ENCODE measurements at regions of chr20 and their contacts with region 1.

Region 1: GRCh38 chr20:41173161-41173721 is 35.9 kb downstream of the PLCG1 start:
- DNase-seq: peak; percentile 72
- H3K4me3 Mint-ChIP-seq: no peak overlapping the region
- H3K27ac Mint-ChIP-seq: peak overlapping the region; percentile 59
- H3K4me1 Mint-ChIP-seq: peaks cover 27% of the 10 kb centered on the region
- H3K27me3 Mint-ChIP-seq: no peaks in the 10 kb centered on the region
- CTCF ChIP-seq: peak; percentile 97

Region 2: DNA sequence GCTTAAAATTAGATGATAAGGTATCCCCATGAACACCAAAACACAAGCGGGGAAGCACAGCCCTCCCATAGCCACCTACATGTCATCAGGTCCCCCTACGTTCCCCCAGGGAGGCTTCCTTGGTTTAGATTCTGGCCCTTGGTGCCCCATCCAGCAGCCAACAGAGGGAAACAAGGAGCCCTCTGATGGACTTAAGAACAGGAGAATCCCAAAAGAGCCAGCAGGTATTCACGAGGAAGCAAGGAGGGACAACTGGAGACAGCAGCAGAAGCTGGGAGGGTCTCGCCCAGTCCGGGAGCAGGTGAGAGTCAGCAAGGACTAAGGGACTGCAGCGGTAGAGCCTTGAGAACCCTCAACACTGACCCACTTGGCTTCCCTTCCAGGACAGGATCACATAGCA is 203.0 kb before region 1 on chr20:
- CTCF ChIA-PET with region 1: interaction called, 9 read pairs
- POLR2A ChIA-PET with region 1: no interaction called
- intact Hi-C with region 1: loop called (anchors 1 kb)
- DNase-seq: no peak
- H3K4me3 Mint-ChIP-seq: no peak overlapping the region
- H3K27ac Mint-ChIP-seq: no peak overlapping the region
- H3K4me1 Mint-ChIP-seq: peaks cover 14% of the 10 kb centered on the region
- H3K27me3 Mint-ChIP-seq: no peaks in the 10 kb centered on the region
- CTCF ChIP-seq: no peak

Region 3: DNA sequence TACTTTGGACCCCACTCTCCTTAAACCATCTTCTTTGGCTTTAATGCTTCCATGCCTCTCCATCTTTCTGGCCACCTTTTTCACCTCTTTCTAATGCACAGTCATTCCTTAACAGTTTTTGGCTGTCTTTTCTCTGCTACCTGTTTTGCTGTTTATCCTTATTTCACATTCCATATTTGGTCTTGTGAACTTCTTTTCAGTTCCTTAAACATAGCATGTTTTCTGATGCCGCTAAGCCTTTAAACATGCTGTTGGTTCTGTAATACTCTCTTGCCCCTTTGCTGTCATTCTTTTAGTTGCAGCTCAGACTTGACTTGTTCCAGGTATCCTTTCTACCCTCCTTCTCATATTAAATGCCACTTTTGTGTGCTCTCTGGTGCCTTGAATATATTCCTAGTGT is 108.9 kb before region 1 on chr20:
- CTCF ChIA-PET with region 1: no interaction called
- POLR2A ChIA-PET with region 1: no interaction called
- intact Hi-C with region 1: no loop called
- DNase-seq: no peak
- H3K4me3 Mint-ChIP-seq: no peak overlapping the region
- H3K27ac Mint-ChIP-seq: no peak overlapping the region
- H3K4me1 Mint-ChIP-seq: peaks cover 22% of the 10 kb centered on the region
- H3K27me3 Mint-ChIP-seq: no peaks in the 10 kb centered on the region
- CTCF ChIP-seq: no peak

Region 4: DNA sequence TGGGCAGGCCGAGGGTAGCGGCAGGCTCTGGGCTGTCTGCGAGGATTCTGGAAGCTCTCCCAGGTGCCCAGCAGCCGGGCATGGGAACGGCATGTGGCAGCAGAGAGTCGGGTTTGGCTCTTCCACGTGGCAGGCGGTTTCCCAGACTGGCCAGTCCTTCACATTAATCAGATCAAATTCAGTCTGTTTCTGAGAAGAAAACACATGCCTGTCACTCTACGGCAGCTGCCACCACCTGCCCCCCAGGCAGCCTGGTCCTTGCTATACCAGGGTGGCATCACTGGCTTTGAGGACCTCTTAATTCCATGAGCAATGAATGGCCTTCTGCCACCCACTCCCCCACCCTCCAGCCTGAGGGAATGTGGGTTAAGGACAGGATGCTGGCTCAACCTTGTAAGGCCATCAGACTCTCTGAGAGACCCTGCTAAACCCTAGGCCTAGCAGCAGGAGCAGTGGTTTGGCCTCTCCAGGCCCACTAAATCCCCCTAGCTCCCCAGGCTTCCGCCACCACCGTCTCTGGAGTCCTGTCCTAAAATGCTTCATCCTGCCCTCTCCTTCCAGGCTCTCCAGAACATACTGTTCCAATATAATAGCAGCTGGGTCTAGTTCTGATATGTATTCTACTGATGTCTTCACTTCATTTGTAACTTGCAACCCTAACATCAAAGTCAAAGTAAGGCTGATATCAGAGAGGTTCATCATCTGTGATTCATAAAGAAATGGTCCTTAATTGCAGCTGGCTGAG is 11.9 kb after region 1 on chr20:
- CTCF ChIA-PET with region 1: interaction called, 28 read pairs
- POLR2A ChIA-PET with region 1: interaction called, 3 read pairs
- intact Hi-C with region 1: no loop called
- DNase-seq: no peak
- H3K4me3 Mint-ChIP-seq: no peak overlapping the region
- H3K27ac Mint-ChIP-seq: peak overlapping the region; percentile 69
- H3K4me1 Mint-ChIP-seq: peaks cover 11% of the 10 kb centered on the region
- H3K27me3 Mint-ChIP-seq: no peaks in the 10 kb centered on the region
- CTCF ChIP-seq: no peak

Region 5: DNA sequence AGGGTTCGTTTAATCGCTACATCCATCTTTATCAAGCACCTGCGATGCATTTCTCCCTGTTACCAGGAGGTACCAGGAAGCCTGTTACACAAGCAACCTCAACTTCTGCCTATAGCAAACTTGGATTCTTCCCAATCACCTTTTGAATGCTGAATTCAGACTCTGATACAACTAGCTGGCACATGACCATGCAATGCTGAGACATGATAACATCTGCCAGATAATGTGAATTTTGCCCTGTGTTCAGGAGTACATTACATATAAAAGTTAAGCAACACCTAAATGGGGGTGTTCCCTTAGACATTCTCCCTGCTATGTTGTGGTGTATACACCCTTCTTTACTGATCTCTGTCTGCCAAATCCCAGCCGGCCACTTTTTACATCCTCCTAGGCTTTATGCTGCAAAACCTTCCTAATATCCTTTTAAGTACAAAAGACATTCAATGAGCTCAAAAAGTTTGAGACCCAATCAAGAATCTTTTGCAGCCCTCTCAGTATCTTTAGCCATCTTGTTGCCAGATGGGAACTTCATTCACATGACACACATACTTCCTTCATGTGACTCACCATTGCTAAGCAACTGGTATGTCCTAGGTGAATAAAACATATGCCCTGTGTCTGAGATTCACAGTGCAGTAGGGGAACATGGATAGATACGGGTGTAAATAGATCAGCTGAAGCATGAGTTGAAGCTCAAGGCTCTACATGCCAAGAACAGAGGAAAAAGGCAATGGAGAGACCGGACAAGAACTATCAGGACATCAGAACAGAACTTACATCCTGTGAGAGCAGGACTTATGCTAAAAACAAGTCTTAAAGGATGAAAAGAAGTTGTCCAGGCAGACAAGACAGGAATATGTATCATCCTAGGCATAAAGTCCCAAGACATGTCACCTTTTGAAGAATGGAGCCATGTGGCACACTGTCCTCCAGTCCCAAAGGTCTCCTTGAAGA is 60.0 kb after region 1 on chr20:
- CTCF ChIA-PET with region 1: interaction called, 154 read pairs
- POLR2A ChIA-PET with region 1: interaction called, 26 read pairs
- intact Hi-C with region 1: loop called (anchors 1 kb)
- DNase-seq: peak; percentile 73
- H3K4me3 Mint-ChIP-seq: peak overlapping the region; percentile 52
- H3K27ac Mint-ChIP-seq: peak overlapping the region; percentile 97
- H3K4me1 Mint-ChIP-seq: peaks cover 33% of the 10 kb centered on the region
- H3K27me3 Mint-ChIP-seq: no peaks in the 10 kb centered on the region
- CTCF ChIP-seq: no peak

Region 6: DNA sequence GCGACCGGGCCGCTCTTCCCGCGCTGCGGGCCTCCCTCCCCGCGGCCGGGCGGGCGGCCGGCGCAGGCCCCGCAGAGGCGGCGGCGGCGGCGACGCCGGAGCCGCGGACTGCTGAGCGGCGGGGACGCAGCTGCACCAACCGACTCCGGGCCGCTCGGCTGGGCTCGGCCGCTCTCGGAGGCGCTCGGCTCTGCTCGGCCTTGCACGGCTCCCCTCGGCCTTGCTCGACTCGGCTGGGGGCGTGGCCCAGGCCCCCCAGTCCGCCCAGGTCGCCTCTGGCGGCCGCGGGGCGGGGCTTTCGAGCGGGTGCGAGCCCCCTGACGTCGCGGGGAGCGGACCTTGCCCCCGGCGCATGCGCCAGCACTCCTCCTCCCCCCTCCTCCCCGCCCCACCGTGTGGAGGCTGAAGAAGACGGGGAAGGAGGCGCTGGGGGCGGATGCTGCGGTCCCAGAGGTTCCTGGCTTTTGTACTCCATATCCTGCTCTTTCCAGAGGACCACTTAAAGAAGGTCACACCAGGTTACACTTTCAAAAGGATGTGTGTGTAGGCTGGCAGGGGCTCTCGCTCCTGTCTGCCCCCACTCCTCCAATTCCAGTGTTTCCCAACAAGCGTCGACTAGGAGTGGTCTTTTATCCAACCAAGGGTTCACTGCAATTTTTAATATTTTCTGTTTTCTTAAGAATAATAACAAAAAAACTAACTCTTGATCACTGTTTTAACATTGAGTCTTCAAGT is 144.5 kb after region 1 on chr20 and contains the start of gene ZHX3:
- CTCF ChIA-PET with region 1: interaction called, 21 read pairs
- POLR2A ChIA-PET with region 1: interaction called, 3 read pairs
- intact Hi-C with region 1: no loop called
- DNase-seq: peak; percentile 96
- H3K4me3 Mint-ChIP-seq: peak within 1 kb of the TSS; percentile 99
- H3K27ac Mint-ChIP-seq: peak within 1 kb of the TSS; percentile 63
- H3K4me1 Mint-ChIP-seq: peaks cover 29% of the 10 kb centered on the region
- H3K27me3 Mint-ChIP-seq: no peaks in the 10 kb centered on the region
- CTCF ChIP-seq: no peak
- total RNA-seq, gene ZHX3: 23.8 and 34.1 TPM in 2 replicates

Region 7: GRCh38 chr20:41411391-41411847 is 238.2 kb after region 1 on chr20:
- CTCF ChIA-PET with region 1: interaction called, 7 read pairs
- POLR2A ChIA-PET with region 1: interaction called, 4 read pairs
- intact Hi-C with region 1: loop called (anchors 5 kb)
- DNase-seq: peak; percentile 9
- H3K4me3 Mint-ChIP-seq: no peak overlapping the region
- H3K27ac Mint-ChIP-seq: no peak overlapping the region
- H3K4me1 Mint-ChIP-seq: no peaks in the 10 kb centered on the region
- H3K27me3 Mint-ChIP-seq: no peaks in the 10 kb centered on the region
- CTCF ChIP-seq: peak; percentile 41

Measured in MCF 10A (cell line).